Calu3 (cell line): ENCODE measurements at regions of chr12 and their contacts with region 1.

Region 1: DNA sequence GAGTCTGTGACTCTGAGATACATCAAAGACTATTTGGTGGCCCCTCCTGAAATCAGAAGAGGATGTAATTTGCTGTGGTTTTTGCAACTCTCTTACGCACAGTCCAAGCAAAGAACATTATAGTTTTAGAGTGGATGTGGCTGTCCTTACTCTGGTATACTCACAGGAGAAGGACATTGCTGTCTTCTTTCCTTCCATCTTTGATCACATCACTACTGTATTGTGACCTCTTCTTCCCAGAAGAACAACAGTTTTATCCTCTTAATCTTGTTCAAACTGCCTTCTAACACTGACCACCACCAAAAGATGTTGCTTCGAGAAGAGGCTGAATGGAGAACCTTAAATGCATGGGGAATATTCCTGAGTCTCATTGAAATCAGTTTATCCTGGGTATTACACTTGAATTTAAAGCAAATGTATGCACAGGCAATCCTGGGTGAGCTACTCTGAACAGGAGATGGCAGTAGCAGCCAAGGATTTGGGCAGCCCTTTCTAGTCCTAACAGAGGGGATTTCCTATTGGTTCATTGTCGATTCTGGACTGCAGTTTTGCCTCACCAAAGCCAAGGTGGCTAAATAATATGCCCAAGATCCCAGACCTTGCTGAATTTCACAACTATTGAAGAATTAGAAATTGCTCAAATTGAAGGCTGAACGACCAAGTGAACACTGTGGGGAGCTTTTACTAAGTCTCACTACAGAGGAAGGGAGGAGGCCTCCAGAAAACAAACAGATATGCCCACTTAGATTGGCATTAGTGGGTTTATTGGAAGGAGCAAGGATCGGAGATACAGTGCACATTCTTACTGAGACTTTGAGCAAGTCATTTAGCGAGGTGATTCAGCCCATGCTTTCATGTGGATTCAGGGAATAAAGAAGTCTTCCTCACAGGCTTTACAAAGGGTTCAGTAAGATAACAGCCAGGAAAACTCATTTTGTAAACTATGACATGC is 282.8 kb downstream of the PAWR start:
- DNase-seq: peak; percentile 82
- H3K4me3 Mint-ChIP-seq: peak overlapping the region; percentile 29
- H3K27ac Mint-ChIP-seq: peak overlapping the region; percentile 48
- H3K4me1 Mint-ChIP-seq: peaks cover 30% of the 10 kb centered on the region
- H3K27me3 Mint-ChIP-seq: no peaks in the 10 kb centered on the region
- CTCF ChIP-seq: peak; percentile 62

Region 2: GRCh38 chr12:79547735-79548609 is 140.0 kb after region 1 on chr12:
- CTCF ChIA-PET with region 1: interaction called, 4 read pairs
- intact Hi-C with region 1: loop called (anchors 1 kb)
- DNase-seq: peak; percentile 71
- H3K4me3 Mint-ChIP-seq: peak overlapping the region; percentile 7
- H3K27ac Mint-ChIP-seq: peak overlapping the region; percentile 83
- H3K4me1 Mint-ChIP-seq: peaks cover 88% of the 10 kb centered on the region
- H3K27me3 Mint-ChIP-seq: no peaks in the 10 kb centered on the region
- CTCF ChIP-seq: peak; percentile 71

Region 3: GRCh38 chr12:79886917-79887519 is 479.1 kb after region 1 on chr12:
- CTCF ChIA-PET with region 1: no interaction called
- intact Hi-C with region 1: loop called (anchors 10 kb)
- DNase-seq: no peak
- H3K4me3 Mint-ChIP-seq: no peak overlapping the region
- H3K27ac Mint-ChIP-seq: no peak overlapping the region
- H3K4me1 Mint-ChIP-seq: peaks cover 39% of the 10 kb centered on the region
- H3K27me3 Mint-ChIP-seq: no peaks in the 10 kb centered on the region
- CTCF ChIP-seq: peak; percentile 43

Region 4: DNA sequence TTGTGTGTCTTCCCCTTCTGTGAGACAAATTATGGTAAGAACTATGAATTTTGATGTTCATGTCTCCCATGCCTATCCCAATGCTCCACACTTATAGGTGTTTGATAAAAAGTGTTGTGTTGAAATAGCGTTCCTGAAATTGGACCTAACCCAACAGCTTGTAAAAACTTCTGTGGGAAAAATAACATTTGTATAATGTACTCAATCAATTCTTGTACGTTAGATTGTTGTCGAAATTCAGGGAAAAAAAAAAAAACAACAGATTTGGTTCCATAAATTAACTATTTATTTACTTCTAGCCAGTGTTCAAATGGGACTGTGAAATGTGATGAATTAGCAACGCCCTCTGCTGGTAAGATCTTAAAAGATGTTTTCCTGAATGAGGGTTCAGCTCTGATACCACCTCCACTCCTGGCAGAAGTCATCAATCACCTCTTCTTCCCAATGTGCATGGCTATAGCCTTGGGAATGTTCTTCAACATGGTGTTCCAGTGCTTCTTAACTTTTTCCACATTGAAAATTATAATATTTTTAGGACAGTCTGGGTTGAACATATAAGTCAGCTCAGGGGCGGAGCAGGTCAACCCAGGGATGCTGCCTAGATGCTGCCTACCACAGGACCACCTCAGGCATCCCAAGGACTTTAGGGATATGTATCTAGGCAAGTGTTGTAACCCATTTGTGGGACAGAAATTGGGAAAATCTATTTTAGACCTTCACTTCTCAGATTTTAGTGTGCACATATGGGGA is 862.0 kb after region 1 on chr12:
- CTCF ChIA-PET with region 1: interaction called, 9 read pairs
- intact Hi-C with region 1: loop called (anchors 1 kb)
- DNase-seq: peak; percentile 41
- H3K4me3 Mint-ChIP-seq: no peak overlapping the region
- H3K27ac Mint-ChIP-seq: no peak overlapping the region
- H3K4me1 Mint-ChIP-seq: peaks cover 21% of the 10 kb centered on the region
- H3K27me3 Mint-ChIP-seq: no peaks in the 10 kb centered on the region
- CTCF ChIP-seq: peak; percentile 65

Region 5: GRCh38 chr12:80763874-80764273 is 1355.9 kb after region 1 on chr12:
- CTCF ChIA-PET with region 1: no interaction called
- intact Hi-C with region 1: loop called (anchors 10 kb)
- DNase-seq: peak; percentile 39
- H3K4me3 Mint-ChIP-seq: no peak overlapping the region
- H3K27ac Mint-ChIP-seq: no peak overlapping the region
- H3K4me1 Mint-ChIP-seq: no peaks in the 10 kb centered on the region
- H3K27me3 Mint-ChIP-seq: no peaks in the 10 kb centered on the region
- CTCF ChIP-seq: peak; percentile 36